ENCODE measurements at regions of chr17 and their contacts with region 1.

Region 1: GRCh38 chr17:28033972-28034714 is 8.3 kb upstream of the NLK start:
- DNase-seq: no peak
- ATAC-seq: peak; percentile 54

Region 2: DNA sequence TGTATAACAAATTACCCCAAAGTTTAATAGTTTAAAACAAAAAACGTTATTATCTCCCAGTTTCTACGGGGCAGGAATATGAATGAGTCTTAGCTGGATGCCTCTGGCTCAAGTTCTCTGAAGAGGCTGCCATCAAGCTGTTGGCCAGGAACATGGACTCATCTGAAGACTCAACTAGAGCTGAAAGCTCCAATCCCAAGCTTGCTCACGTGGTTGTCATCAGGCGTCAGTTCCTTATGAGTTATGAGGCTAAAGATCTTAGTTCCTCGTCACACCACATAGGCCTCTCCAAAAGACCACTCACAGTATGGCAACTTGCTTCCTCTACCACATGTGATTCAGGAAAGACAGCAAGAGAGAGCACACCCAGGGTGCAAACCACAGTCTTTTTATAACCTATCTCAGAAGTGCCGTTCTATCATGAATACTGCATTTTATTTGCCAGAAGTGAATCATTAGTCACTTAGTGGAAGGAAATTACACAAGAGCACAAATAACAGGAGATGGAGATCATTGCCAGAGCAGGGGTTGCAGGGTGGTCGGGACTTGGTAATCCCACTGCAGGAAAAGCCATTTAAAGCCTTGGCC is 40.3 kb before region 1 on chr17:
- intact Hi-C with region 1: loop called (anchors 5 kb)
- DNase-seq: no peak
- ATAC-seq: no peak

Measured in Right ventricle myocardium inferior (tissue), 1 donor.